ENCODE measurements at regions of chr2 and their contacts with region 1.

Region 1: GRCh38 chr2:13006829-13007717 is 290.3 kb downstream of the TRIB2 start:
- DNase-seq: peak; percentile 58 to 70
- H3K4me3 ChIP-seq: no peak overlapping the region
- H3K4me3 Mint-ChIP-seq: no peak overlapping the region
- H3K27ac Mint-ChIP-seq: no peak overlapping the region
- H3K4me1 ChIP-seq: no peaks in the 10 kb centered on the region
- H3K4me1 Mint-ChIP-seq: no peaks in the 10 kb centered on the region
- H3K27me3 ChIP-seq: no peaks in the 10 kb centered on the region
- H3K27me3 Mint-ChIP-seq: peaks cover 10% of the 10 kb centered on the region
- CTCF ChIP-seq: peak; percentile 65 to 89

Region 2: DNA sequence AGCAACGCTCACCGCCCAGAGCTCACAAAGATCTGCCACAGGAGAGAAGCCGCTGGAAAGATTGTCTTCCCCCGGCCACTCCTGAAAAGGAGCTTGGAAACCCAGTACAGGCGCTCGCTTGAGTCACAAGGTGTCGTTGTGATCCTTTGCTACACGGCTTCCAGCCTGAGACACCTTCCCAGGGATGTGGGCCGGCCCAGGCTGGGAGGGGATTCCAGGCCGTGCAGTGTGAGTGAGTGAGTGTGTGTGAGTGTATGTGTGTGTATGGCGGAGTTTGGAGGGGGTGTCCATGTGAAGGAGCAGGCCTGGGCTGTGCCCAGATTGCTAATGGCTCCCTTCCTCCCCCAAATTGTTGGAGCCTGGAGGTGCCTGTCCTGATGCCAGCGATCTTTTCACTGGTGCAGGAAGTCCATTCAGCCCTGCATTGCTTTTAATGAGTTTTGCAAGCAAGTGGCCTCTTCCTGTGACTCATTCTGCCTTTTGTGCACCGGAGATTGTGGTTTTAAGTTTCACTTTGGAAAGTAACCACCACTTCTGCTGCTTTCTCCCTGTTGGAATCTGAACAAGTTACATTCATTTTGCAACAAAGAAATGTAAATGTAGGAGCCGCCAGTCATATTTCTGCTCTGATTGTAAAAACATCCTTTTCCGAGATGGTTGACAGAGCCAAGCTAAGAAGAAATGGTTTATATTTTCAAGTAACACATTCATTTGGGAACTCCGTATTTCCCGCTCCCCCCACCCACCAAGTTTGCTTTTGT is 1176.9 kb before region 1 on chr2:
- CTCF ChIA-PET with region 1: interaction called, 12 read pairs
- POLR2A ChIA-PET with region 1: no interaction called
- intact Hi-C with region 1: loop called (anchors 1 kb)
- DNase-seq: peak; percentile 60 to 73
- H3K4me3 ChIP-seq: no peak overlapping the region
- H3K4me3 Mint-ChIP-seq: peak overlapping the region; percentile 55
- H3K27ac Mint-ChIP-seq: no peak overlapping the region
- H3K4me1 ChIP-seq: no peaks in the 10 kb centered on the region
- H3K4me1 Mint-ChIP-seq: no peaks in the 10 kb centered on the region
- H3K27me3 ChIP-seq: no peaks in the 10 kb centered on the region
- H3K27me3 Mint-ChIP-seq: no peaks in the 10 kb centered on the region
- CTCF ChIP-seq: peak in 1 of 2 experiments; percentile 33

Region 3: GRCh38 chr2:11863513-11864328 is 1143.4 kb before region 1 on chr2:
- CTCF ChIA-PET with region 1: no interaction called
- POLR2A ChIA-PET with region 1: no interaction called
- intact Hi-C with region 1: loop called (anchors 1 kb)
- DNase-seq: peak; percentile 79 to 81
- H3K4me3 ChIP-seq: no peak overlapping the region
- H3K4me3 Mint-ChIP-seq: peak overlapping the region; percentile 19
- H3K27ac Mint-ChIP-seq: no peak overlapping the region
- H3K4me1 ChIP-seq: no peaks in the 10 kb centered on the region
- H3K4me1 Mint-ChIP-seq: no peaks in the 10 kb centered on the region
- H3K27me3 ChIP-seq: no peaks in the 10 kb centered on the region
- H3K27me3 Mint-ChIP-seq: peaks cover 4% of the 10 kb centered on the region
- CTCF ChIP-seq: peak; percentile 91 to 92

Region 4: DNA sequence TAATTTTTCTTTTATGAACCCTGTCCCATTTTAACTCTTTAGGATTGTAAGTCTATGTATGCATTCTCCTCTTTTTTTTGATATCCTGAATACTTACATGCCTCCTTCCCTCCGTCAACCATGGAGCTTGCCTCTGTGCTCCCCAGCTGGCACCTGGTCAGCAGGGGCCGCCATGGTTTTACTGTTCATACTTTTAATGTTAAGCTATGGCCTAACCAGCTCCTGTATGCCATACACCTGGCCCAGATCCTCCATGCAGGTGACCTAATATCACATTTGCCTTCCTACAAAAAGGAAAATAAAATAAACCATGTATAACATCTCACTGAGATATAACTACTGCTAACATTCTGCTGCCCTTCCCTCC is 573.5 kb before region 1 on chr2:
- CTCF ChIA-PET with region 1: interaction called, 13 read pairs
- POLR2A ChIA-PET with region 1: no interaction called
- intact Hi-C with region 1: loop called (anchors 1 kb)
- DNase-seq: peak; percentile 41 to 49
- H3K4me3 ChIP-seq: no peak overlapping the region
- H3K4me3 Mint-ChIP-seq: no peak overlapping the region
- H3K27ac Mint-ChIP-seq: no peak overlapping the region
- H3K4me1 ChIP-seq: no peaks in the 10 kb centered on the region
- H3K4me1 Mint-ChIP-seq: no peaks in the 10 kb centered on the region
- H3K27me3 ChIP-seq: no peaks in the 10 kb centered on the region
- H3K27me3 Mint-ChIP-seq: peaks cover 4% of the 10 kb centered on the region
- CTCF ChIP-seq: peak in 1 of 2 experiments; percentile 53

Region 5: GRCh38 chr2:12881951-12882350 is 125.1 kb before region 1 on chr2:
- CTCF ChIA-PET with region 1: no interaction called
- POLR2A ChIA-PET with region 1: no interaction called
- intact Hi-C with region 1: loop called (anchors 1 kb)
- DNase-seq: no peak
- H3K4me3 ChIP-seq: no peak overlapping the region
- H3K4me3 Mint-ChIP-seq: no peak overlapping the region
- H3K27ac Mint-ChIP-seq: no peak overlapping the region
- H3K4me1 ChIP-seq: no peaks in the 10 kb centered on the region
- H3K4me1 Mint-ChIP-seq: no peaks in the 10 kb centered on the region
- H3K27me3 ChIP-seq: no peaks in the 10 kb centered on the region
- H3K27me3 Mint-ChIP-seq: peaks cover 4% of the 10 kb centered on the region
- CTCF ChIP-seq: no peak

Region 6: GRCh38 chr2:12931186-12931844 is 75.8 kb before region 1 on chr2:
- CTCF ChIA-PET with region 1: no interaction called
- POLR2A ChIA-PET with region 1: no interaction called
- intact Hi-C with region 1: loop called (anchors 2 kb)
- DNase-seq: peak in 1 of 2 experiments; percentile 14
- H3K4me3 ChIP-seq: no peak overlapping the region
- H3K4me3 Mint-ChIP-seq: no peak overlapping the region
- H3K27ac Mint-ChIP-seq: no peak overlapping the region
- H3K4me1 ChIP-seq: no peaks in the 10 kb centered on the region; the same call in 1 of the 2 replicates
- H3K4me1 Mint-ChIP-seq: no peaks in the 10 kb centered on the region
- H3K27me3 ChIP-seq: no peaks in the 10 kb centered on the region; the same call in 1 of the 2 replicates
- H3K27me3 Mint-ChIP-seq: peaks cover 3% of the 10 kb centered on the region
- CTCF ChIP-seq: peak; percentile 75 to 78

Region 7: DNA sequence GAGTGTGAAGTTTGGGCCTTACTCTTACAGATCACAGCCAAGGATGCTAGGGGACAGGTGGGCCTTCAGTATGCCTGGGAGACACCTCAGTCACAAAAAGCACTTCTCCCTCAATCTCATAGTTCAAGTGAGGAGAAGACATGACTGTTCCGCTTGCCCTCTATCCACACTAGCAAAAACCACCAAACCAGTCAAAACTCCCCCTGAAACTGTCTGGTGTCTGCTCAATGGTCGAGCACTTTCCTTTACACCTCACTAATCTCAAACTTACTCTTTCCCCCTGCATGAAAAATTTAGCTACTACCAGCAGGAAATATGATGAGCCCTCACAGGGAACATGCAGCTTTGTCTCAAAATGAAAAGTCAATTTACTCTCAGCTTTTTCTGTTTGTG is 58.1 kb before region 1 on chr2:
- CTCF ChIA-PET with region 1: no interaction called
- POLR2A ChIA-PET with region 1: no interaction called
- intact Hi-C with region 1: no loop called
- DNase-seq: no peak
- H3K4me3 ChIP-seq: no peak overlapping the region
- H3K4me3 Mint-ChIP-seq: no peak overlapping the region
- H3K27ac Mint-ChIP-seq: no peak overlapping the region
- H3K4me1 ChIP-seq: 0 out of 2 replicates have a peak, but pooled peaks cover 6% of the 10 kb centered on the region
- H3K4me1 Mint-ChIP-seq: peaks cover 7% of the 10 kb centered on the region
- H3K27me3 ChIP-seq: peaks cover 2% of the 10 kb centered on the region; the same call in 1 of the 2 replicates
- H3K27me3 Mint-ChIP-seq: peaks cover 8% of the 10 kb centered on the region
- CTCF ChIP-seq: no peak

Region 8: GRCh38 chr2:12965540-12966269 is 41.4 kb before region 1 on chr2:
- CTCF ChIA-PET with region 1: no interaction called
- POLR2A ChIA-PET with region 1: no interaction called
- intact Hi-C with region 1: no loop called
- DNase-seq: no peak
- H3K4me3 ChIP-seq: no peak overlapping the region
- H3K4me3 Mint-ChIP-seq: no peak overlapping the region
- H3K27ac Mint-ChIP-seq: no peak overlapping the region
- H3K4me1 ChIP-seq: no peaks in the 10 kb centered on the region
- H3K4me1 Mint-ChIP-seq: no peaks in the 10 kb centered on the region
- H3K27me3 ChIP-seq: no peaks in the 10 kb centered on the region
- H3K27me3 Mint-ChIP-seq: peaks cover 7% of the 10 kb centered on the region
- CTCF ChIP-seq: no peak

Region 9: GRCh38 chr2:13021470-13021957 is 14.4 kb after region 1 on chr2:
- CTCF ChIA-PET with region 1: no interaction called
- POLR2A ChIA-PET with region 1: no interaction called
- intact Hi-C with region 1: no loop called
- DNase-seq: no peak
- H3K4me3 ChIP-seq: no peak overlapping the region
- H3K4me3 Mint-ChIP-seq: no peak overlapping the region
- H3K27ac Mint-ChIP-seq: no peak overlapping the region
- H3K4me1 ChIP-seq: no peaks in the 10 kb centered on the region
- H3K4me1 Mint-ChIP-seq: no peaks in the 10 kb centered on the region
- H3K27me3 ChIP-seq: no peaks in the 10 kb centered on the region
- H3K27me3 Mint-ChIP-seq: no peaks in the 10 kb centered on the region
- CTCF ChIP-seq: no peak

Region 10: DNA sequence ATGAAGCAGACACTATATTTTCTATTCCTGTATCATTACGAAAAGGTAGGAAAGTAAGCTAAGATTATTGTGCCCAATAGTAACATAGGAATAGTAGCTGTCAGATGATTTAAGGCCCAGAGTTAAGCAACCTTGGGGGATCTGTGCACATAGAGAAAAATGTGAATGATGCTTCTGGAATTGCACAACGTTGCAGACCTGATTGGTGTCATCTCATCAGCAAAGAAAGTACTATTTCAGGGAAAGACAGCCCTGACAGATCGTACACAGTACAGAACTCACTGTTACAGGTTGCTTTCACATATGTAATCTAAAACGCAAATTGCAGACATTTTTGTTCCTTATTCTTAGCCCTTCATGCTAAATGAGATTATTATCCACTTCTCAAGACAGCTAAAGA is 245.5 kb after region 1 on chr2:
- CTCF ChIA-PET with region 1: no interaction called
- POLR2A ChIA-PET with region 1: no interaction called
- intact Hi-C with region 1: no loop called
- DNase-seq: no peak
- H3K4me3 ChIP-seq: no peak overlapping the region
- H3K4me3 Mint-ChIP-seq: no peak overlapping the region
- H3K27ac Mint-ChIP-seq: no peak overlapping the region
- H3K4me1 ChIP-seq: no peaks in the 10 kb centered on the region
- H3K4me1 Mint-ChIP-seq: no peaks in the 10 kb centered on the region
- H3K27me3 ChIP-seq: no peaks in the 10 kb centered on the region
- H3K27me3 Mint-ChIP-seq: no peaks in the 10 kb centered on the region
- CTCF ChIP-seq: no peak